ENCODE measurements at regions of chr13 and their contacts with region 1.

Region 1: DNA sequence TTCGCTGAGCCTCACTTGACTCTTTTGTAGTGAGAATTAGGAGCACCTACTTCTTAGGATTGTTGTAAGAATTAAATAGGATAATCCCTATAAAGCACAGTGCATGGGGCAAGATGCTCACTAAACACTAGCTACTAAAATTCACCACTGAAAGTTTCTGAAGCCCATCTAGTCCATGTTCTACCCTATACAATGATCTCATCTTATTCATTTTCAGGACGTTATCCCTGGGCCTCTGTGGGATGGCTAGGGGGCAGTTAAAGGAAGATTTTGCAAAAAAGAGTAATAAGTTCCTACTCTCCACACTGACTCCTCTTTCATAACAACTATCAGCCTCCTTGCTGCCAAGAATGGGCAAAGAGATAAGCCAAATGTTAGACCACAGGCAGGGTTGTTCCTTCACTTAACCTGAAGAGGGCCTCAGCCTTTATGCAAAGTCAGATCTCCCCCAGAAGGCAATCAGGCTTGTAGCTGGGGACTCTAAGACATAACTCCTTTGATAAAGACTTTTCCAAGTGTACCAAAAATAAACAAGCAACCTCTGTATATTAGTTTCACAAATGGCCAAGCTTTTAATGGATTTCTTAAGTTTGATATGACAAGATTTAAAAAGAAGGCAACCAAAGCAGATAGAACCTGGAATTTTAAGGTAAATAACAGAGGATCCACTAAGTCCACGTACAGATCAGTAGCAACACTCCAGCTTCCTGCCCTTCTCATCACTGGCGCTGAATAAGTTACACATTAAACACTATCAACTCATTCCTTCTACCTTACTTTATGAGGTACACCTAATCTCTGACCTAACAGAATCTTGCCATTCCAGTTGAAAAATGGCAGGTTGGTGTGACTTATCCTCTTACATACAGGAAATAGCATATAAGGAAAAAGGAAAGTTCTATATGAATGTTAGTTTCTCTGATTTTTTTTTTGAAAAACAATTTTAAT is 44.4 kb downstream of the ELF1 start:
- DNase-seq: no peak
- ATAC-seq: peak; percentile 99
- H3K4me3 Mint-ChIP-seq: no peak overlapping the region
- H3K27ac Mint-ChIP-seq: no peak overlapping the region
- H3K4me1 Mint-ChIP-seq: peaks cover 7% of the 10 kb centered on the region
- H3K27me3 Mint-ChIP-seq: no peaks in the 10 kb centered on the region
- CTCF ChIP-seq: peak; percentile 26

Region 2: GRCh38 chr13:40984668-40985366 is 10.1 kb after region 1 on chr13:
- CTCF ChIA-PET with region 1: interaction called, 13 read pairs
- POLR2A ChIA-PET with region 1: no interaction called
- DNase-seq: no peak
- ATAC-seq: no peak
- H3K4me3 Mint-ChIP-seq: no peak overlapping the region
- H3K27ac Mint-ChIP-seq: no peak overlapping the region
- H3K4me1 Mint-ChIP-seq: peaks cover 21% of the 10 kb centered on the region
- H3K27me3 Mint-ChIP-seq: no peaks in the 10 kb centered on the region
- CTCF ChIP-seq: no peak

Region 3: GRCh38 chr13:41011382-41011956 is 36.7 kb after region 1 on chr13:
- CTCF ChIA-PET with region 1: interaction called, 13 read pairs
- POLR2A ChIA-PET with region 1: no interaction called
- DNase-seq: no peak
- ATAC-seq: no peak
- H3K4me3 Mint-ChIP-seq: no peak overlapping the region
- H3K27ac Mint-ChIP-seq: no peak overlapping the region
- H3K4me1 Mint-ChIP-seq: peaks cover 43% of the 10 kb centered on the region
- H3K27me3 Mint-ChIP-seq: no peaks in the 10 kb centered on the region
- CTCF ChIP-seq: no peak

Region 4: DNA sequence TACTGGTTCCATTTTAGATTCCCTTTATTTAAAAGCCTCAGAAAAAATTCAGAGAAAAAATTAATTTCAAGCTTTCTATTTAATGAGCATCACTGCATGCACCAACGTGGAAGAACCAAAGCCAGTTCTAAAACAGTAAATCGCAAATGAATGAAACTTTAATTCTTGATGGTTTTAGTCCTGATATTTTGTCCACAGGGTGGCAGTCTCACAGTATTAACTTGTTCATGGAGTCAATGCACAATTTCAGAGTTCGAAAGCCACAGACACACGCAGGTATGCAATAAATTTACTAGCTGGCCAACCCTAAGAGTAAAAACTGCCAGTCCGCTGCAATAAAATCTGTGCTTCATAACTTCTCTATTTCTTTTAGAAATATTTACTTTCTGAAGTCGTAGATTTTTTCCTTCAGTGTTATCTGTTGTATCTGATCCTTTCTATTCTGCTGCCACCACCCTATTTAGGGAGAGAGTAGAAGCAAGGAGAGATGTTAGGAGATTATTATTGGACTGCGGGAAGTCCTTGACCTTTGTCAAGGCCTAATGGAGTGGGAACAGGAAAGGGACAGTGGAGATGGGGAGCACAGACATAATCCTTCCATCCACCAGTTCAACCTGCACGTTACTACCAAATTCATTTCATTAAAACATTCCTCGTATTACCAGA is 79.6 kb after region 1 on chr13:
- CTCF ChIA-PET with region 1: interaction called, 15 read pairs
- POLR2A ChIA-PET with region 1: no interaction called
- DNase-seq: no peak
- ATAC-seq: peak; percentile 26
- H3K4me3 Mint-ChIP-seq: no peak overlapping the region
- H3K27ac Mint-ChIP-seq: 0 out of 2 replicates have a peak overlapping the region, but pooled peaks have one; percentile 18
- H3K4me1 Mint-ChIP-seq: peaks cover 25% of the 10 kb centered on the region
- H3K27me3 Mint-ChIP-seq: no peaks in the 10 kb centered on the region
- CTCF ChIP-seq: no peak

Measured in WTC11 (cell line).